IMR-90 (cell line): ENCODE measurements at regions of chr9 and their contacts with region 1.

Region 1: DNA sequence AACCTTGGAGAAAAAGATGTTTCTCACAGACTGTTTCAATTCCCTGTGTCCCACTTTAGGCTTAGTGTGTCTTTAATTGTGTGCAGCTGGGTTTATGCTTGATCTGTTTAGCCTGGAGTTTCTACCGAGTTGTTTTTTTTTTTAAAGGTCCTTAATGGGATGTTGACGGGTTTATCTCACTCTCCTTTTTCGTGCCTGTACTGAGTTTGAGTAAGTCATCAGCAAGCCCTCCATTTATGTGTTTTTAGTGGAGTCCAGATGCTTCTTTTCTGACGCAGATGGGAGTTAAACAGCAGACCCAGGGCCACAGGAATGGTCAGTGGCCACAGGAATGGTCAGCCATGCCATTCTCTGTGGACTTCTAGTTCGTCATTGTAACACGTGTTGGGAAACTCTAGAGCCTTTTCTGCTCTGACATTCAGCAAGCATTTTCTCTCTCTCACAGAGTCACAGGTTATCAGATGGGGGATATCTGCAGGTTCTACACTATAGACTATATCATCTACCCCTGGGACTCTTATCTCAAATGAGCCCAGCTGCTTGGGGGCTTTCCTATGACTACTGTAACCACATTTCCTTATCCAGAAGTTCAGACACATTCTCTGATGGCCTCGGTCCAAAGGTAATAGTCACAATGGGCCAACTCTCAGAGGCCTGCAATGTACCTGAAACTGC is 190.5 kb downstream of the TTLL11 start:
- DNase-seq: peak; percentile 100
- ATAC-seq: peak; percentile 97
- H3K4me3 ChIP-seq: no peak overlapping the region
- H3K27ac ChIP-seq: peak overlapping the region; percentile 79; the same call in 1 of the 2 replicates
- H3K4me1 ChIP-seq: peaks cover 14% of the 10 kb centered on the region
- H3K27me3 ChIP-seq: no peaks in the 10 kb centered on the region
- CTCF ChIP-seq: no peak
- POLR2A ChIP-seq: no peak
- RAD21 ChIP-seq: peak; percentile 16; the same call in 1 of the 2 replicates

Region 2: GRCh38 chr9:121883281-121884056 is 19.1 kb before region 1 on chr9:
- CTCF ChIA-PET with region 1: no interaction called
- POLR2A ChIA-PET with region 1: interaction called, 10 read pairs
- dilution Hi-C with region 1: no loop called
- in situ Hi-C with region 1: no loop called
- intact Hi-C with region 1: no loop called
- DNase-seq: peak; percentile 37
- ATAC-seq: peak; percentile 35
- H3K4me3 ChIP-seq: no peak overlapping the region
- H3K27ac ChIP-seq: no peak overlapping the region
- H3K4me1 ChIP-seq: peaks cover 11% of the 10 kb centered on the region
- H3K27me3 ChIP-seq: peaks cover 5% of the 10 kb centered on the region; the same call in 1 of the 2 replicates
- CTCF ChIP-seq: no peak
- POLR2A ChIP-seq: no peak
- RAD21 ChIP-seq: no peak

Region 3: DNA sequence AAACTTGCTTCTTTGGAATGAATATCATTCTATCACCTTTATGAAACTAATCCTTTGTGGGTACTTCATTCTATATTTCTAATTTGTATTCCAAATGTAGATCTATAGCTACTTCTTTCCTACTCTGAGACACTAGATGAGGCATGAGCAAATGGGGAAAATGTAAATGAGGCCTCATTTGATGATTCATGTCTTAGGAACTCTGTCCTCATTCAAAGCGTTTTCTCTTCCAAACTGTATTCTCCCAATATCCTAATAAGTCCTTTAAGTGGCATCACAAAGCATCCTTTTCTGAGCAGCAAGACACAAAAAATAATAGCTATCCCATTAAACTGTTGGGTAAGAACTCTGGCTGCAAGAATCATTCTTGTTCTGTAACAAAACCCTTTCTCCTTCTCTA is 134.4 kb after region 1 on chr9:
- CTCF ChIA-PET with region 1: no interaction called
- POLR2A ChIA-PET with region 1: no interaction called
- dilution Hi-C with region 1: no loop called
- in situ Hi-C with region 1: no loop called
- intact Hi-C with region 1: no loop called
- DNase-seq: peak; percentile 68
- ATAC-seq: peak; percentile 92
- H3K4me3 ChIP-seq: no peak overlapping the region
- H3K27ac ChIP-seq: no peak overlapping the region
- H3K4me1 ChIP-seq: peaks cover 8% of the 10 kb centered on the region
- H3K27me3 ChIP-seq: no peaks in the 10 kb centered on the region
- CTCF ChIP-seq: no peak
- POLR2A ChIP-seq: no peak
- RAD21 ChIP-seq: no peak

Region 4: DNA sequence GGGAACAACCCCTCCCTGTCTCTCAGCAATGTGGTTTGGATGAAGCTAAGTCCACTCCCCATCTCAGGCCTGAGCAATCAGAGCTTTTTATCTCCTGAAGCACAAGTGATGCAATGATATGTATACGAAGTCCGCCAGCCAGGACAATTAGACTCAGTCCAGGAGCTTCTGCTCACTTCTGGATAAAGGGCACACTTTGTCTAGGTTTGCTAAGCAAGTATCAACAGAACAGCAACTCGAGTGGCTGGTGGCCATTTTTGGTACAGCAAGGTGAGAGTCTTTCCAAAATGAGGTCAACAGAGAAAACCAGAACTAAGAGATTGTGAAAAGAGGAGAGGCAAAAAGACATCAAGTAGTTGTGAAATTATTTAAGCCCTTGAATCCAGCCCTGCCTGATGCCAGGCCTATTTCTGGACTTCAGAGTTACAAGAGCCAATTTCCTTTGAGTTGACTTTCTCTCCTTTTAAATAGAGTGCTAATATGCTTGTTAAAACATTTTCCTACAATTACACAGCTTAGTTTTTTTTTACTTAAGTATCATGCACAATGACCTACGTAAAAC is 248.8 kb after region 1 on chr9:
- CTCF ChIA-PET with region 1: no interaction called
- POLR2A ChIA-PET with region 1: no interaction called
- dilution Hi-C with region 1: no loop called
- in situ Hi-C with region 1: no loop called
- intact Hi-C with region 1: no loop called
- DNase-seq: no peak
- ATAC-seq: no peak
- H3K4me3 ChIP-seq: no peak overlapping the region
- H3K27ac ChIP-seq: no peak overlapping the region
- H3K4me1 ChIP-seq: no peaks in the 10 kb centered on the region
- H3K27me3 ChIP-seq: no peaks in the 10 kb centered on the region
- CTCF ChIP-seq: no peak
- POLR2A ChIP-seq: no peak
- RAD21 ChIP-seq: no peak